Dorsolateral prefrontal cortex (tissue), 120 donors: ENCODE measurements at regions of chr1 and their contacts with region 1.

Region 1: DNA sequence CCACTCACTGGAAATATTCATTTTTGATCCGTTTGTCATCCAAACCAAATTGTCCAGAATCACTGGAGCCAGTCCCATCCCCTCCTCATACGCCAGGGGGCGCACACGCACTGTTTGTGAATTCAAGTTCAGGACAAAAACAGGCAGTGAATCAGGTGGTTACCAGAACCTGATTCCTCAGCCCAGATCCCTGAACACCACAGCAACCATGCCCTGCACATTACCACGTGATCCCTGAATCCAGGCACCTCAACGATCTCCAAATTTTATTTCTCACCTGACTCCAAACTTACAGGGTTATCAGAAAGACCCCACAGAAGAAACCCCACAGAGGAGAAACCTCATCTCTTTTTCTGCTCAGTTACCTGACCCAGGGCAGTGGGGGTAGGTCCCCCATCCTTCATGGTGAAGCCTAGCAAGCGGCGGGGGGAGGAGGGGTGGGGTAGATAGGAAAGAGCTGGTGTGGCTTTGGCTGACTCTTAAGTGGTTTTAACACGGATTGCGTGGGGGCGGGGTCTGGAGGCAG is 1.4 kb upstream of the PTPRF start:
- DNase-seq: peak; percentile 42 to 90 (median 84)
- H3K4me3 ChIP-seq: peak overlapping the region in 2 of 59 donors; percentile 3 to 16
- H3K27ac ChIP-seq: peak overlapping the region in 20 of 59 donors; percentile 7 to 97 (median 82)
- H3K27me3 ChIP-seq: no peaks in the 10 kb centered on the region
- CTCF ChIP-seq: peak; percentile 88 to 99 (median 97)

Region 2: DNA sequence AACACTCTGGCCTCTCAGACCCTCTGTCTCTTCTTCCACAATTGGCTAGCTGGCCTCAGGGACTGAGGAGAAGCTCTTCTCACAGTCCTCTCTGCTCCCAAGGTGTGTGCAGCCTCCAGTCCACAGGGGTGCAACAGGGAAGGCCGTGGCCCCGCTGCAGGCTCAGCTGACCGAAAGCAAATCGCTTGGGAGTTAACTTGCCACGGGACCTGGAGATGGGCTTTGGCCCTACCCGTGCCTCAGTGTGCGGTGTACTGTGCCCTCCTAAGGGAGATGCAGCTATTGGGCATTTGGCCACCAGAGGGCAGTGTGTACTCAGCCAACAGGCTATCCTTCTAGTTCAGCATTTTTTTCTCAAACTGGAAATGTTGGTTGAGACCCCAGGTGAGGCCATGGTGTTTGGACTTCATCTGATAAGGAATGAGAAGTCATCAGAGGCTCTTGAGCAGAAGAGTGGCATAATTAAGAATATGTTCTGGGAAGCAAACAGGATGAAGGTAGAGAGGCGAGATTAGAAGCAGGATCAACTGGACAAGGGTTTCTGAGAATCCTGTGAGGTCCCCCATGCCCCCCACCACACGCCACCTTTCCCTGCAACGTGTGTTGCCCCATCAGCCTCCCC is 302.0 kb before region 1 on chr1:
- intact Hi-C with region 1: loop called (anchors 5 to 10 kb)
- DNase-seq: peak; percentile 79 to 91 (median 88)
- H3K4me3 ChIP-seq: no peak overlapping the region
- H3K27ac ChIP-seq: peak overlapping the region in 3 of 59 donors; percentile 13 to 49 (median 27)
- H3K27me3 ChIP-seq: no peaks in the 10 kb centered on the region
- CTCF ChIP-seq: peak; percentile 91 to 100 (median 97)

Region 3: DNA sequence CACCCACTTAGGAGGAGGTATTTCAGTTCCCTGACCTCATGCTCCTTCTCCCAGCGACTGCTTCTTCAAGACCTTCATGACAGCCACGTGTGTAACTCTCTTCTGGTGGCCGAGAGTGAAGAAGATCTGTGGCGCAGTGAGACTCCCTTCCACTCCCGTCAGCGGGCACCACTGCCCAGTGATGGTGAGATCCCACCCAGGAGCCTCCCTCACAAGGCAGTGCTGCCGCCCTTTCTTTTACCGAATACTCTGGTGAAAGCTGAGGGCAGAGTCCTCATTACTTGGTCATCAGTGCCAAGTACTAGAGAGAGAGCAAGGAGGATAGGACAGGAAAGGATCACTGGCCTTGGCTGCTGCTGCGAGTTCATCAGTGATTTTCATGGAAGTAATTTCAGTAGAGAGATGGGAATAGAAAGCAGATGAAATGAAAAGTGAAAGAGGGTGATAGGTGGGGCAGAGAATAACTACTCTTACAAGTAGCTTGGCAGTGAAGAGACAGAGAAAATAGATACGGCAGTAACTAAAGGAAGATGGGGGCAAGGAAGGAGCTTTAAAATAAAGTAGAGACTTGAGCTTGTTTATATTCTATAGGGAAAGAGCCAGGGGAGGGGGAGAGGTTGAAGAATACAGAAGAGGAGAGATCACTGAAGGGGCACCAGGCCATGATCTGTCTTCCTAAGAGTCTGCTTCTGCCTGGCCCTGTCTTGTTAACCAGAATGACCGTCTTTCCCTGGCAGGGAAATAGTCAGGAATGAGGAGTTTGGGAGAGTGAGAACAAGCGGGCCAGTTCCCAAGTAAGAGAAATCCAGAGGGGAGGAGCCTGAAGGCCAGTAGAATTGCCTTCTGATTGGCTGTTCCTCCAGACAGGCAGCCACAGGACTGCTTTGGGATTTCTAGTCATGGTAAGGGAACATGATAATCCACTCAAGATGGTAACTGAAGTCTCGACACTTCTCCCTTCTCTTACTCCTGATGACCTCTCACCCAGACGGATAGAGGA is 93.8 kb before region 1 on chr1:
- intact Hi-C with region 1: no loop called
- DNase-seq: peak in 2 of 10 donors; percentile 17 to 22
- H3K4me3 ChIP-seq: no peak overlapping the region
- H3K27ac ChIP-seq: peak overlapping the region in 14 of 59 donors; percentile 10 to 52 (median 32)
- H3K27me3 ChIP-seq: no peaks in the 10 kb centered on the region
- CTCF ChIP-seq: no peak

Region 4: DNA sequence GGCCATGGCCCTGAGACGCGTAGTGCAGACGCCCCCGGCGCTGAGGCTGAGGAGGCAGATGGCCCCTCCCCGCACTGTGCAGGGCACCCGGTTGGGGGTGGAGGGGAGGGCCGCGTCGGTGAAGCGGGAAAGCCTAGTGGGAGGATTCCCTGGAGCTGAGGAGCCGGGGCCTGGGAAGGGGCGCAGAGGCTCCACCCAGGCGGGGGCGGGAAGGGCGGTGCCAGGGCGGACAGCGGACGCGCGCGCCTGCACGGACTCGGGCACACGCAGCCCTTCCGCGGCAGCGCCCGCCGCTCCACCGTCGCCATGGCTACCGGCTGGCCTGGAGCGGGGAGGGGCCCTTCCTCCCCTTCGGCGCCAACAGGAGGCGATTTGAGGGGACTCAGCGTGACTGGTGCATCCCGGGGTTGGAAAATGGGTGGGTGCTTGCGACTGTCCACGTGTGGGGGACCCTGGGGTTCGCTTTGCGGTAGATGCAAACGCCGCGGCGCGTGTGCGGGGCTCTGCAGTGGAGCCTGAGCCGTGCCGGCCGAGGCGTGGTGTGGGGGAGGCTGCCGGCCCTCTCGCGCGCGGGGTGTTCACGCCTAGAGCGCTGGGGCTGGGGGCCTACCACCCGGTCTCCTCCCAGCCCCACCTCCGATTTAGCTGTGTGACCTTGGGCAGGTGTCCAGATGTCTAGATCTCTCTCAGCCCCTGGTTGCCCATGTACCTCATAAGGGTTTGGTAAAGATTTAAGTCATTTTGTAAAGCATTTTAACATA is 36.5 kb after region 1 on chr1:
- intact Hi-C with region 1: loop called (anchors 5 kb)
- DNase-seq: peak; percentile 43 to 85 (median 66)
- H3K4me3 ChIP-seq: peak overlapping the region; percentile 36 to 77 (median 59)
- H3K27ac ChIP-seq: peak overlapping the region in 58 of 59 donors; percentile 9 to 90 (median 82)
- H3K27me3 ChIP-seq: no peaks in the 10 kb centered on the region
- CTCF ChIP-seq: peak in 5 of 56 donors; percentile 14 to 25 (median 16)

Region 5: DNA sequence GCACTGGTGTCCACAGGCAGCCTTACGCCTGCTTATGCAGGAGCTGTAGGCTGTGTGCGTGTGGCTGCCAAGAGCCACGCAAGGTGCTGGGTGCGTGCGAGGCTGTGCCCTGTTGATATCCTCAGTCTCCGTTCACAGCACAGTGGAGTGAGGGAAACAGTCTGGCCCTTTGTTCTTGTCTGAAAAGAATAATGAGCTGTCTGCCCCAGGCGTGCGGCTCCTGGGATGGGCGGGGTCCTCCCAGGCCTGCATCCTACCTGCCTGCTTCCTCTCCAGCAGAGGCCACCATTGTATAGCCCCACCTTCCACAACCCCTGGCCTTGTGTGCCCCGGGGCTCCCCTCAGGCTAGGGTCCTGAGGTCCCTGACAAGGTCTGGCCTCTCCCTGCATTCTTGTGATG is 73.7 kb after region 1 on chr1:
- intact Hi-C with region 1: loop called in 1 of 2 experiments (anchors 1 kb)
- DNase-seq: no peak
- H3K4me3 ChIP-seq: no peak overlapping the region
- H3K27ac ChIP-seq: peak overlapping the region in 13 of 59 donors; percentile 14 to 59 (median 37)
- H3K27me3 ChIP-seq: no peaks in the 10 kb centered on the region
- CTCF ChIP-seq: no peak

Region 6: DNA sequence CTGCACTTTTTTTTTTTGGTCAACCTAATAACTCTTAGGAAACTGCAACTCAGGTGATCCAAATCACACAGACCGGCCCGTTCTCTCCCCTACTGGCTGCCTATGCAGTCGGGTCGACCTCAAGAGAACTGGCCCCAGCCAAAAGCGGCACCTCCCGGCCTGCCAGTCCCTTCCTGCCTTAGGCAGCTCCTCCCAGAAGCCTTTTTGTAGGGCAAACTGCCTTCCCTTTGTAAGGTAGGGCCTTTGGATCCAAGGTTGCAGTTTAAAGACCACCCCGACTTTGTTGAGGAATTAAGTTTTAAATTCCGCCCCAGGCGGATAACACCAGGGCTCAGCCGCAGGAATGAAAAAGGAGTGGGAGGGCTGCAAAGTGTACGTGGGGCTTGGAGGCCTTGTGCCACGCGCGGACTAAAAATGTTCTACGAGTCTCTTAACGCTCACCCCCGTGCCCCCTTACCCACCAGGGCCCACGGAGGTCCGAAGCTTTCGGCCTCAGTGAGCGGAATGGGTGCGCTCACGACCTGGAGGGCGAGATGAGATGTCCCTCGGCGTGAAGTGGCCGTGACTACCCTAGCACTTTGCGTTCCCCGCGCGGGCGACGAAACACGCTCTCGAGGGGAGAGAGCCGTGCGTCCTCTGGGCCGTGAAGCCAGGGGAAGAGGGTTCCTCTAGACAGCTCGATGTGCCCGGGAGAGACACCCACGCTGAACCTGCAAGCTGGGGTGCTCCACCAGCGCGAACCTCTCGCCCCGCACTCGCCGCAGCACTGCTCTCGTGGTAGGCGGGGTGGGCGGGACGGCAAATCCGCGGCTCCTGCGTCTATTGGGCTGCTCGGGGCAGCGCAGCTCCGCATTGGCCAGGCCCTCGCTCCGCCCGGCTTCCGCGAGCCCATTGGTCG is 177.6 kb after region 1 on chr1:
- intact Hi-C with region 1: loop called (anchors 2 to 5 kb)
- DNase-seq: peak; percentile 84 to 96 (median 93)
- H3K4me3 ChIP-seq: peak overlapping the region; percentile 44 to 97 (median 88)
- H3K27ac ChIP-seq: peak overlapping the region in 45 of 59 donors; percentile 2 to 91 (median 71)
- H3K27me3 ChIP-seq: no peaks in the 10 kb centered on the region
- CTCF ChIP-seq: peak in 12 of 56 donors; percentile 12 to 37 (median 20)

Region 7: GRCh38 chr1:43731867-43732531 is 202.7 kb after region 1 on chr1:
- intact Hi-C with region 1: no loop called
- DNase-seq: no peak
- H3K4me3 ChIP-seq: no peak overlapping the region
- H3K27ac ChIP-seq: no peak overlapping the region
- H3K27me3 ChIP-seq: no peaks in the 10 kb centered on the region
- CTCF ChIP-seq: no peak

Region 8: GRCh38 chr1:43934101-43934985 is 405.1 kb after region 1 on chr1:
- intact Hi-C with region 1: loop called (anchors 2 to 5 kb)
- DNase-seq: peak in 9 of 10 donors; percentile 53 to 76 (median 64)
- H3K4me3 ChIP-seq: peak overlapping the region in 11 of 59 donors; percentile 11 to 54 (median 39)
- H3K27ac ChIP-seq: peak overlapping the region in 3 of 59 donors; percentile 1 to 68 (median 5)
- H3K27me3 ChIP-seq: peaks cover 0 to 9% (median 0%) of the 10 kb centered on the region in 45 donors
- CTCF ChIP-seq: peak; percentile 62 to 95 (median 86)